ENCODE measurements at regions of chr11 and their contacts with region 1.

Region 1: DNA sequence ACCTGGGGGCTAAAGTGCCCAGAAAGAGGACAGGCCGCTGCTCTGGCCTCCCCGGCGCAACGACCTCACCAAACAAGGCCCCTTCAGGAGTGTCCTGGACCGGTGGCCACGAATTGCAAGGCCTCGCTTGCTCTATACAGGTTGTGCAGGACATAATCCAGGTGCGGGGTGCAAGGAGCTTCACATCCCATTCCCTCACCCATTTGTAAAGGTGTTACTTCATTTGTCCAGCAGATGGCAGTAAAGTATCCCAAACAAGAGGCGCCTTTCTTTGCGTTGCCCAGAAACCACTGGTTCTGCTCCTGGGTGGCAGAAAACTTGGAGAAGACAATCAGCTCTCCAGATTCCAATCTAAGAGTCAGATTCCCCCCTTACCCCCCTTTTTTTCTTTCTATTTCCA is 35.9 kb upstream of the PRDM11 start:
- DNase-seq: peak; percentile 31
- H3K4me3 Mint-ChIP-seq: no peak overlapping the region
- H3K27ac Mint-ChIP-seq: no peak overlapping the region
- H3K4me1 Mint-ChIP-seq: no peaks in the 10 kb centered on the region
- H3K27me3 Mint-ChIP-seq: peaks cover 34% of the 10 kb centered on the region

Region 2: GRCh38 chr11:45227836-45228235 is 117.3 kb after region 1 on chr11:
- CTCF ChIA-PET with region 1: interaction called, 11 read pairs
- POLR2A ChIA-PET with region 1: no interaction called
- intact Hi-C with region 1: loop called (anchors 5 kb)
- DNase-seq: no peak
- H3K4me3 Mint-ChIP-seq: no peak overlapping the region
- H3K27ac Mint-ChIP-seq: no peak overlapping the region
- H3K4me1 Mint-ChIP-seq: no peaks in the 10 kb centered on the region
- H3K27me3 Mint-ChIP-seq: no peaks in the 10 kb centered on the region

Region 3: DNA sequence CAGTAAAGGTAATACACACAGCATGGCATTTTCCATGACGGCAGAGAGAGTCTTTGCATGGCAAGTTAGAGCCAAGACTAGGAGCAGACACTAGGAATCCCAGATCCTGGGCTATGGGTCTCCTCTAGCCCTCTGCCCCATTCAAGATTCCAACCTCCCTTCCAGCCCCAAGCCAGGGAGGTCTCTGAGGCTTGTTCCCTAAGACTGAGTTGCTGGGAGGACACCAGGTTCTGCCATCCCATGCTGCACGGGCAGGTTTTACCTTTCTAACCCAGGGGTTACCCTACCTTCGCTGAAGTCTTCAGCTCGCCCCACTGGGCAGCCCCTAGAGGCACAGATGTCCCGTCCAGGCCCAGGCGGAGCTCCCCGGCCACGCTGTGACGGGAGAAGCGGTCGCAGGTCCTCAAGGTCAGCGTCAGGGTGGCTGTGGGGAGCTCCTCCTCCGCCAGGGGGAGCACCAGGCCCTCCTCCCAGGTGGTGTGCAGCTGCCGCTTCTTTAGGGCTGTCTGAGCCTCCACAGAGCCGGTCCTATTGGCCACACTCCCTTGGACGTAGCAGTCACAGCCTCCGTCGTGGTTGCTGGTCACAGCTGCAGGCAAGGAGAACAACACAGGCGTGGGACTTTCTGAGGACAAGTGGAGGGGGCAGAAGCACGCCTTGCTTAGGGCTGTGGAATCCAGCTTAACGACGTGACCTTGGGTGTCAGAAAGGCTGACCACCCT is 141.7 kb after region 1 on chr11:
- CTCF ChIA-PET with region 1: interaction called, 16 read pairs
- POLR2A ChIA-PET with region 1: no interaction called
- intact Hi-C with region 1: loop called (anchors 5 kb)
- DNase-seq: peak; percentile 49
- H3K4me3 Mint-ChIP-seq: no peak overlapping the region
- H3K27ac Mint-ChIP-seq: no peak overlapping the region
- H3K4me1 Mint-ChIP-seq: no peaks in the 10 kb centered on the region
- H3K27me3 Mint-ChIP-seq: peaks cover 10% of the 10 kb centered on the region

Region 4: DNA sequence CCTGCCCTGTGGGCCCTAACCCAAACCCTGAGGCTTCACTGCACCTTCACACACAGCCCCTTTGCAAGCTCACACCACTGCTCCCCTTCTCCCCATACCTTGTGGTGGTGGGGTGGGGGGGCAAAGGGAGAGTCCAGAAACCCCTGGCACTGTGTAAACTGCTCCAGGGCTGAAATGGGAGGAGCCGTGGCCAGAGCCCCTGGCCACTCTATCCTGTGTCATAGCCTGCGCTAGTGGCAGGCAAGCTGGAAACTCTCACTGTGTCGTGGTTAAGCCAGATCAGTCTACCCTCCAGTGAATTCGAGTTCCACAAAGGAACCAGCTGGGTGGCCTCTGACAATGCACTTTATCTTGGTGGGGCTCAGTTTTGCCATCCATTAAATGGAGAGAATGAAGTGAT is 183.9 kb after region 1 on chr11:
- CTCF ChIA-PET with region 1: interaction called, 35 read pairs
- POLR2A ChIA-PET with region 1: no interaction called
- intact Hi-C with region 1: loop called (anchors 1 kb)
- DNase-seq: no peak
- H3K4me3 Mint-ChIP-seq: no peak overlapping the region
- H3K27ac Mint-ChIP-seq: no peak overlapping the region
- H3K4me1 Mint-ChIP-seq: no peaks in the 10 kb centered on the region
- H3K27me3 Mint-ChIP-seq: peaks cover 26% of the 10 kb centered on the region

Region 5: DNA sequence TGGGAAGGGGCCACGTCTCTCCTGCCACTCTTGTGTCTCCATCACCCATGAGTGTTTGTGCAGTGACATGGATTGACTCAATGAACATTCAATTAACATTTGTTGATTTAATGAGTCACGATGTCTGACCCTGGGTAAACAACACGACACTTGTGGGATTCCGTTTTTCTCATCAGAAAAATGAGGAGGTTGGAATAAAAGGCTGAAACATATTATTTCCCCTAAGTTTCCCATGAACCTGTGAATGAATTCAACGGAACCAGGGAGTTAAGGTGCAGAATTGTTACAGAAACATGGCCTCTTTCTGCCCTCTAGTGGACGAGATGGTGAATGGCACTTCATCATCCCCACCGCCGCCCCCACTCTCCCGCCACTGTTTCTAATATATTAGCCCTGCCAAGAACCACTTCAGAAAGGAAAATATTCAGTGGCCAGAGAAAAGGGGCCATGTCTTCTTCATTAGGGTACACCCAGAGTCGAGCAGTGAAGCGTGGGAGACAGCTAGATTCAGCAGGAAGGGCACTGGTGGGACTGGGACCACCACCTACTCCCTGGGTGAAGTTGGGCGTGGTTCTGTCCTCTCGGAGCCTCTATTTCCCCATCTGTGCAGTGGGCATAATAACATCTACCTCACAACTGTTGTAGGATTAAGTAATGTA is 221.8 kb after region 1 on chr11:
- CTCF ChIA-PET with region 1: interaction called, 117 read pairs
- POLR2A ChIA-PET with region 1: no interaction called
- intact Hi-C with region 1: loop called (anchors 1 kb)
- DNase-seq: peak; percentile 49
- H3K4me3 Mint-ChIP-seq: no peak overlapping the region
- H3K27ac Mint-ChIP-seq: no peak overlapping the region
- H3K4me1 Mint-ChIP-seq: no peaks in the 10 kb centered on the region
- H3K27me3 Mint-ChIP-seq: peaks cover 3% of the 10 kb centered on the region

Measured in activated CD4-positive, alpha-beta memory T cell treated with anti-CD3 and anti-CD28 coated beads for 36 hours (primary cell).